IMR-90 (cell line): ENCODE measurements at regions of chr4 and their contacts with region 1.

Region 1: DNA sequence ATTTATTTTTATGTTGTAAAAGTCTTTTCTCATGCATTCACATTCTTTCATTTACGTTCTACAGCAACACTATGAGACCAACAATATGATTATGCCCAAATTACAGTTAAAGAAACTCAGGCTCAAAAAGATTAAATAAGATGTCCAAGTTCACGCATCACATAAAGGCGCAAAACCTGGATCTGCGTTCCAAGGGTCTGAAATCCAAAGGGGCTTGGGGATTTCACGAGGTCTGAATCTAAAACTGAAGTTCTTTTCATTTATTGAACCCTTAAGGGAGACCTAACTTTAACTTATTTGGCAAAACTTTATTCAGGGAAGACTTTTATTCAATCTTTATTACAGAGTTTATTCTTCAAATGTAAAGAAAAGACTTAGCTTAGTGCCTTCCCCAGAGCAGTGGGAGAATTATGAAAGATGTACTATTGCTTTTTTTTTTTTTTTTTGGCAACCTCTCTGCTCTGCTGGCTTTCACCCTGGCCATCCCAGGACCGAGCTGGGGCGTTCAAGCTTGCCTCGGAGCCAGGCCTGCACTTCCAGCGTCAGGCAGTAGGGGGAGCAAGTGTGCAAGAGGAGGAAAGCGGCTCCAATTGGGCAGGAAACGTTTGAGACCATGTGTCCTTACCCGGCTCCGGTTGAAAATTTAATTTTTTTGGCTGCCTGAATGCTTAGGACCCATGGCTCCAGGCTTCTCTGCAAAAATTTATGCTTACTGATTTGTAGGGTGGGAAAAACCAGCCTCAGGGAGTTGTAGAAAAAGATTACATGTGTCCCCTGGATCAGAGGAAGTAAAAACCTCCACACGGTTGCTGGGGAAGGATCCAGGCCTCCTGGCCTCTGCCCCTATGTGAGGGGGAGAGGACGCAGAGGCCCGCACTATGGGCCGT is 344.3 kb upstream of the KLF3 start:
- DNase-seq: peak; percentile 82
- ATAC-seq: peak; percentile 80
- H3K4me3 ChIP-seq: peak overlapping the region; percentile 33; the same call in 1 of the 2 replicates
- H3K27ac ChIP-seq: peak overlapping the region; percentile 72
- H3K4me1 ChIP-seq: peaks cover 6% of the 10 kb centered on the region
- H3K27me3 ChIP-seq: no peaks in the 10 kb centered on the region
- CTCF ChIP-seq: peak; percentile 91
- POLR2A ChIP-seq: no peak; the same call in 1 of the 2 replicates
- RAD21 ChIP-seq: peak; percentile 79

Region 2: DNA sequence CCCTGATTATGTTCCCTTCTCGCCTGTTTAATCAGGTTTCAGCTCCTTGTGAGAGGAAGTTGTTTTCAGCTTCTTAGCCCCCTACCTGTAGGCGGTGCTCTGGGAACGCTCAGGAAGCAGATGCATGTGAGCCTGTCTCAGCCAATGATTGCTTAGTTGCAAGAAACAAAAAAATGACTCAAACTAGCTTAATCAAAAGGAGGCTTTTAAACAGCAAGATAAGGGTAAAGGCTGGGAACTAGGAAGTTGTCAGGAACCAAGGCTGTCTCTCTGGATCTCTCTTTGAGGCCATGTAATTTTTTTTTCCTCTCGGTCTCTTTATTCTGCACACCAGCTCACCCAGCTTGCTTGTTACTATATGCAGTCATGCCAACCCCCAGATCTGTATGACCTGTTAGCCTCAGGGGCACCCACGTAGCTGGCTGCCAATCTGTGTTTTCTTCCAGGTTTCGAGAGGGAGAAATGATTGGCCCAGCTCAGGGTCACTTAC is 250.4 kb before region 1 on chr4:
- CTCF ChIA-PET with region 1: no interaction called
- POLR2A ChIA-PET with region 1: no interaction called
- dilution Hi-C with region 1: no loop called
- in situ Hi-C with region 1: loop called (anchors 10 kb)
- intact Hi-C with region 1: loop called (anchors 2 kb)
- DNase-seq: peak; percentile 89
- ATAC-seq: peak; percentile 93
- H3K4me3 ChIP-seq: no peak overlapping the region
- H3K27ac ChIP-seq: no peak overlapping the region
- H3K4me1 ChIP-seq: peaks cover 17% of the 10 kb centered on the region
- H3K27me3 ChIP-seq: no peaks in the 10 kb centered on the region
- CTCF ChIP-seq: peak; percentile 79
- POLR2A ChIP-seq: no peak
- RAD21 ChIP-seq: peak; percentile 85

Region 3: GRCh38 chr4:38562751-38563198 is 243.1 kb after region 1 on chr4:
- CTCF ChIA-PET with region 1: no interaction called
- POLR2A ChIA-PET with region 1: no interaction called
- dilution Hi-C with region 1: no loop called
- in situ Hi-C with region 1: no loop called
- intact Hi-C with region 1: loop called (anchors 5 kb)
- DNase-seq: peak; percentile 28
- ATAC-seq: peak; percentile 65
- H3K4me3 ChIP-seq: no peak overlapping the region
- H3K27ac ChIP-seq: peak overlapping the region; percentile 77; the same call in 1 of the 2 replicates
- H3K4me1 ChIP-seq: peaks cover 18% of the 10 kb centered on the region
- H3K27me3 ChIP-seq: no peaks in the 10 kb centered on the region
- CTCF ChIP-seq: no peak
- POLR2A ChIP-seq: no peak
- RAD21 ChIP-seq: no peak

Region 4: GRCh38 chr4:38675146-38676121 is 355.7 kb after region 1 on chr4:
- CTCF ChIA-PET with region 1: interaction called, 4 read pairs
- POLR2A ChIA-PET with region 1: interaction called, 6 read pairs
- dilution Hi-C with region 1: no loop called
- in situ Hi-C with region 1: loop called (anchors 5 kb)
- intact Hi-C with region 1: loop called (anchors 1 kb)
- DNase-seq: peak; percentile 88
- ATAC-seq: peak; percentile 70
- H3K4me3 ChIP-seq: no peak overlapping the region
- H3K27ac ChIP-seq: no peak overlapping the region
- H3K4me1 ChIP-seq: peaks cover 40% of the 10 kb centered on the region
- H3K27me3 ChIP-seq: no peaks in the 10 kb centered on the region
- CTCF ChIP-seq: peak; percentile 94
- POLR2A ChIP-seq: no peak
- RAD21 ChIP-seq: peak; percentile 98